ENCODE measurements at regions of chr4 and their contacts with region 1.

Region 1: GRCh38 chr4:110344162-110344561 is 131.8 kb upstream of the ENPEP start:
- DNase-seq: no peak
- H3K4me3 ChIP-seq: no peak overlapping the region
- CTCF ChIP-seq: peak; percentile 4

Region 2: GRCh38 chr4:109921384-109921808 is 422.8 kb before region 1 on chr4:
- CTCF ChIA-PET with region 1: no interaction called
- POLR2A ChIA-PET with region 1: no interaction called
- DNase-seq: peak; percentile 66
- H3K4me3 ChIP-seq: no peak overlapping the region
- CTCF ChIP-seq: no peak

Region 3: GRCh38 chr4:110211007-110211769 is 133.0 kb before region 1 on chr4:
- CTCF ChIA-PET with region 1: no interaction called
- POLR2A ChIA-PET with region 1: no interaction called
- DNase-seq: no peak
- H3K4me3 ChIP-seq: no peak overlapping the region
- CTCF ChIP-seq: peak; percentile 67

Region 4: DNA sequence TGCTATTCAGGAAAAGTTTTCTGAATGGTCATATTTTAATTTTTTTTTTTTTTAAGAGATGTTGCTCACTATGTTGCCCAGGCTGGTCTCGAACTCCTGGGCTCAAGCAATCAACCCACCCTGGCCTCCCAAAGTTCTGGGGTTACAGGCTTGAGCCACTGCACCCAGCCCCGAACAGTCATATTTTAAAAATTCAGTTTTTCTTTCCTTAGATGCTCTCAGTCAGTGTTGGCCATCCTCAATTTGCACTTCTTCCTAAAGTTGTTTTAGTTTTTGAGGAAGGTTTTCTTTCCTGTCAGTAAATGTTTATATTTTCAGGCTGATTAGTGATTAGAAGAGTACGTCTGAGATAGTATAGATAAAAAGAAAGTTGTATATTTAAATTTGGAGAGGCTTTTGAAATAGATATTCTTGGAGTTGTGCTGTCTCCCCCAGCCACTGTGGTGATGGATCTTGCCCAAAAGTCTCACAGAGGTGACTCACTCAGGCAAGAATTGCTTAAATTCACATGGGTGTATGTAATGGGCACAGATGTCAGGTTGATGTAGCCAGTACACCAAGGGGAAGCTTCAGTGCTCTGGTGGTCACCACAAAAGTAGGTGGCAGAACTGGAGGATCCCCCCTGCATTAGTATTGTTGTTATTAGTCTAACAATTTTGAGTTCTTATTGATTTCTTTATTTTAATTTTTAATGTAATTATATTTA is 73.5 kb before region 1 on chr4:
- CTCF ChIA-PET with region 1: no interaction called
- POLR2A ChIA-PET with region 1: no interaction called
- DNase-seq: peak; percentile 28
- H3K4me3 ChIP-seq: no peak overlapping the region
- CTCF ChIP-seq: no peak

Region 5: DNA sequence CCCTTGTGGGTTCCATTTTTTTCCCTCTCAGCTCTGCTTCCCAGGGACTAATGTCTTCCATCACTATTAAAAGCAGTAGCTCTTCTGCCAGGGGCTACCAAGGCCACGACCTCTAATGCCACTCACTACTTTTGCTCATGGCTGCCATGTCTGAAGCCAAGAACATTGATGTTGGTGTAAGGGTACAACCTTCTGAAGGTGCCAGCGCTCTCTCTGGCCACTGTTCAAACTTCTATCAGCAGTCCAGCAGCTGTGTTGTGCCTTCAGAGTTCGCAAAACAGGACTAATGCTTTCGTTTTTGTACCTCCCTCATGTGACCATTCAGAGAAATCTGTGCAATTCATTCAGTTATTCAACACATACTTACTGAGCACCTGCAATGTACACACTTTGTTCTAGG is 10.3 kb after region 1 on chr4:
- CTCF ChIA-PET with region 1: interaction called, 10 read pairs
- POLR2A ChIA-PET with region 1: no interaction called
- DNase-seq: no peak
- H3K4me3 ChIP-seq: no peak overlapping the region
- CTCF ChIP-seq: no peak

Region 6: DNA sequence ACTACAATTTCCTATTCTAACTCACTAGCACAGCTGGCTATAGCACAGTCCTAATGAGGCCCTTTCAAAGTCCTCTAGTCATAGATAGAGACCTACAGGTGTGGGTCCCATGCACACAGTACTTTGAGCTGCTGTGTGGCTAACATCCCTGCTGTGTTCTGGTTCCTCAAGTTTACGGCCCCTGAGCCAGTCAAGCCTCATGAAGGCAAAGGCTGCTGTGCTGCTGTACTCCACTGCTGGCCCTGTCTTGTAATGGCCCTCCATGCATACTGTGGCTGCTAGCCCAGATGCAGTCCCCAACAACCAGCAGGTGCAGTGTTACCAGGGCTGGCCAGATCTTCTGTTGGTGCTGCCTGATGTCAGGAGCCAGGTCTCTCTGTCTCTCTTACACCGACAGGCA is 108.4 kb after region 1 on chr4:
- CTCF ChIA-PET with region 1: no interaction called
- POLR2A ChIA-PET with region 1: no interaction called
- DNase-seq: no peak
- H3K4me3 ChIP-seq: no peak overlapping the region
- CTCF ChIP-seq: no peak